CD14-positive monocyte (primary cell): ENCODE measurements at regions of chr2 and their contacts with region 1.

Region 1: GRCh38 chr2:239895669-239896068 is 129.5 kb downstream of the NDUFA10 start:
- DNase-seq: peak; percentile 50 to 75 (median 66)
- H3K4me3 ChIP-seq: peak overlapping the region in 1 of 3 experiments; percentile 57
- H3K4me3 Mint-ChIP-seq: peak overlapping the region in 1 of 2 donors; percentile 53
- H3K27ac ChIP-seq: peak overlapping the region; percentile 85 to 88
- H3K27ac Mint-ChIP-seq: peak overlapping the region; percentile 75 to 97 (median 90)
- H3K4me1 ChIP-seq: peaks cover 39 to 44% of the 10 kb centered on the region in 2 donors
- H3K4me1 Mint-ChIP-seq: peaks cover 56% of the 10 kb centered on the region
- H3K27me3 ChIP-seq: no peaks in the 10 kb centered on the region
- H3K27me3 Mint-ChIP-seq: peaks cover 4 to 9% (median 5%) of the 10 kb centered on the region in 3 donors
- CTCF ChIP-seq: no peak

Region 2: DNA sequence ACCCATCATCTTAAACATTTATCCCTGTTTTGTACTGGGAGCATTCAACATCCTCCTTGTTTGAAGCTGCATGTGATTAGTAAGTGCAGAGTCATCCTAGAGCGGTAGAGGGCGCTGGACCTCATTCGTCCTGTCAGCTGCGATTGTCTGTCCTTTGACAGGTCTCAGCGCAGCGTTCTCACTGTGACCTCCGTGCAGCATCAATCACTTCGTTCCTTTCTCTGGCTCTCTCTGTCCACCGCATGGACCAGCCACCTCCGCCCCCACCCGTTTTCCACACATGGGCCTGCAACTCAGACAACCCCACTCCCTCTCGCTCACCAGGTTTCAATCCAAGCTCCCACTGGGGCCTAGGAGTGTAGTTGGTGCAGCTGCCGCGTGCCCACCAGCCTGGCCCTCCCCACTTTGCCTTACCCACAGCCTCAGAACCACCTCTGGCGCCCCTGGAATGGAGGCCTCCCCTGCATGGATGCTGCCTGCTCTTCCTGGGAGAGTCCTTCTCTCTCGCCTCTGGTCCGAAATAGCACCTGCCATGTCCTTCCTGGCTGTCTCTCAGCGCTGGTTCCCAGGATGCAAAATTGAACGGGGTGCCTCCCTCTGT is 39.0 kb after region 1 on chr2:
- intact Hi-C with region 1: loop called in 1 of 2 experiments (anchors 5 kb)
- DNase-seq: peak; percentile 80 to 83 (median 83)
- H3K4me3 ChIP-seq: no peak overlapping the region
- H3K4me3 Mint-ChIP-seq: peak overlapping the region; percentile 27 to 79
- H3K27ac ChIP-seq: no peak overlapping the region
- H3K27ac Mint-ChIP-seq: peak overlapping the region; percentile 64 to 83 (median 81)
- H3K4me1 ChIP-seq: peaks cover 38 to 55% of the 10 kb centered on the region in 2 donors
- H3K4me1 Mint-ChIP-seq: peaks cover 49% of the 10 kb centered on the region
- H3K27me3 ChIP-seq: no peaks in the 10 kb centered on the region
- H3K27me3 Mint-ChIP-seq: peaks cover 0 to 7% (median 3%) of the 10 kb centered on the region in 3 donors
- CTCF ChIP-seq: peak; percentile 91

Region 3: GRCh38 chr2:240060977-240061591 is 165.4 kb after region 1 on chr2:
- intact Hi-C with region 1: no loop called
- DNase-seq: peak in 2 of 3 donors; percentile 3 to 27
- H3K4me3 ChIP-seq: no peak overlapping the region
- H3K4me3 Mint-ChIP-seq: no peak overlapping the region
- H3K27ac ChIP-seq: no peak overlapping the region
- H3K27ac Mint-ChIP-seq: no peak overlapping the region
- H3K4me1 ChIP-seq: no peaks in the 10 kb centered on the region
- H3K4me1 Mint-ChIP-seq: no peaks in the 10 kb centered on the region
- H3K27me3 ChIP-seq: peaks cover 8 to 16% of the 10 kb centered on the region in 2 donors
- H3K27me3 Mint-ChIP-seq: peaks cover 2 to 26% (median 3%) of the 10 kb centered on the region in 3 donors
- CTCF ChIP-seq: peak; percentile 48